Cardiac septum (tissue), 1 donor: ENCODE measurements at regions of chr4 and their contacts with region 1.

Region 1: DNA sequence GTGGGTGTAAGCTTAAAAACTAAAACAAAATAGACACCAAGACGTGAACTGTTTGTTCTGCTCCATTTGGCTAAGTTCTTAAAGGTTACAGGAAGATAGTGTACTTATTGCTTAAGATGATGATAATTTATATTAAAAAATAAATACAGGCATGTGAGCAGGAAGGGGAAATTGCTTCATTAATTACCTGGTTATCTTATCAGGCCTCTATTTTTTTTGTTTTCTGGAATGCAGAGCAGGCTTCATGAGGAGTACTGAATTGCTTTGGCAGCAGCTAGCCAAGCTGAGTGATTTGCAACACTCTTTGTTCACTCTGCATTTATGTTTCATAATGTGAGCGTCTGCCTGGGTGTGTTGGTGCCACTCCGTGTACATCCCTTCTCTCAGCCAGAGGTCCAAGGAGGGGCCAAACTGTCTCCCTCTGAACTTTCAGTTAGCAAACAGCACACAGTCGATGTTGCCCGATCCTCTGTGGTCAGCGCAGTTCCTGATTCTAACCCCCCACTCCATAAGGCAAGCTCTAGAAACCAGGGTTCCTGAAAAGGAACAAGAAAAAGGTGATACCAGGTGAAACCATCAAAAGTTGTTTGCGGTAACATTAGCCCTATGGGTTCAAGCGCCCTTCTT is 348.2 kb downstream of the SPRY1 start:
- DNase-seq: no peak

Region 2: GRCh38 chr4:123671633-123672404 is 73.0 kb before region 1 on chr4:
- intact Hi-C with region 1: loop called (anchors 10 kb)
- DNase-seq: no peak

Region 3: GRCh38 chr4:123869286-123870060 is 124.7 kb after region 1 on chr4:
- intact Hi-C with region 1: no loop called
- DNase-seq: no peak

Region 4: GRCh38 chr4:123922847-123923246 is 178.1 kb after region 1 on chr4:
- intact Hi-C with region 1: loop called (anchors 5 kb)
- DNase-seq: no peak

Region 5: GRCh38 chr4:124015766-124016165 is 271.0 kb after region 1 on chr4:
- intact Hi-C with region 1: no loop called
- DNase-seq: no peak